PC-3 (cell line): ENCODE measurements at regions of chr13 and their contacts with region 1.

Region 1: DNA sequence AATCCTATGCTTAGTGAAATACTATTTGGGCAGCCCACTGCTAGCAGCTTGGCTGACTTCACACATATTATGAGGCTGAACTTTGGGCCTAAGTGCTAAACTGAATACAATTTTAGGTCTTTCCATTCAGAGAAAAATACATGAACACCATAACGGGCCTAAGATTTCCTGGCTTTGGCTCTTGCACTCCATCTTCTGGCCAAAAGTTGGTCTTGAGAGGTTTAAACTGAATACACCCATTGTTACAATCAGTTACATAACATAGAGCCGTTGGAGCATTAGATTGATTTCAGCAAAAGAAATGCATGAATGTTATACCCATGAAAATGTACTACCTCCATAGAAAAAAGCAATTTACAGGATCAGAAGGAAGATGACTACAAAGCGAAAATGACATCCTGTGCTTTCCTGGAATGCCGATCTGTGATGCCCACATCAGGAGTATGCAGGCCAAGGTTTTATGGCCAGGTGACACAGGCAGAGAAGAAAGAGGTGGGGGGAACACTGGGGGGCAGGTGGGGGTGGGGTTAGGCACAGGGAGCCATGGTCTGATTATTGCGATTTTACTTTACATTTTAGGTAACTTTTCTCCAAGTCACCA is 11.1 kb upstream of the SHISA2 start:
- DNase-seq: peak; percentile 76
- ATAC-seq: peak; percentile 66
- H3K4me3 ChIP-seq: no peak overlapping the region
- H3K27ac ChIP-seq: 0 out of 2 replicates have a peak overlapping the region, but pooled peaks have one; percentile 40
- H3K4me1 ChIP-seq: peaks cover 22% of the 10 kb centered on the region
- H3K27me3 ChIP-seq: no peaks in the 10 kb centered on the region
- CTCF ChIP-seq: peak; percentile 90

Region 2: DNA sequence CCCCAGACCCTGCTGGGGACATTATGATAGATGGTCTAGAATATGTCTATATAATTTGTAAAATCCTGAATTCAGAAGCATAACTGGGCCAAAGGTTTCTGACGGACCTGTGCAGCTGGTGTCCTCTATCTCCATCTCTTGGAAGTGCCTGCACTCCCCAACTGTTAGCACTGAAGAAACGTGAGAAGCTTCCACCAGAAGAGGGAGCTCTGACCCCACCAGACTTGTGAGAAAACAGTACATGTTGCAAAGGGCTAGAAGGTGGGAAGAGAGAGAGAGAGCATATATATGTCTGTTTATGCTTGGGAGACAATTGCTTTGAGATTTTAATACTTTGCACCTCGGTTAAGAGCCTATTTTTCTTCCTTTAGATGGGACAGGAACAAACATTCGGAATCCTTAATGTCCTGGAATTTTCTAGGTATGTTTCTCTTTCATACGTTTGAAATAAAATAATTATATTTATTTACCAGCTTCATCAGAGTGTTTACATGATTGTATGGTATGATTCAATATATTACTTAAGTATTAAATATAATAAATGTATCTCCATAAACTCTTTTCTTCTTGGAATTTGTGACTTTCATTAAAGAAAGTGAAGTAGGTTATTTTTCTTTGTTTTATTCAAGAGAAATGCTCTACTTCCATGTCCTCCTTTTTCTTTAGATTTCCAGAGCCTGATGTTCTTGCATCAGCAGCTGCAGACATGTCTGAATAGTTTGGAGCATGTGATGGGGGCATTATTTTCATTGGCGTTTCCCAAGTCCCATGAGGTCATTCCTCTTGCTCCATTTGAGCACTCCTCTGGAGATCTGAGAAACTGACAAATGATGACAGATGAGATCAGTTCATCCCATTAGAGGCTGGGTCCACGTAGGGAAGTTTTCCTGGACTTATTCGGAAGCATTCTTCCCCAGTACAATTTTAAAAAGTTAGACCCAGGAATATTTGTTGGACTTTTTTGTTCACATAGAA is 488.2 kb before region 1 on chr13:
- CTCF ChIA-PET with region 1: interaction called, 9 read pairs
- POLR2A ChIA-PET with region 1: no interaction called
- intact Hi-C with region 1: loop called (anchors 1 kb)
- DNase-seq: peak; percentile 88
- ATAC-seq: peak; percentile 97
- H3K4me3 ChIP-seq: no peak overlapping the region
- H3K27ac ChIP-seq: no peak overlapping the region
- H3K4me1 ChIP-seq: no peaks in the 10 kb centered on the region
- H3K27me3 ChIP-seq: peaks cover 64% of the 10 kb centered on the region
- CTCF ChIP-seq: peak; percentile 88

Region 3: GRCh38 chr13:25827831-25828465 is 235.0 kb before region 1 on chr13:
- CTCF ChIA-PET with region 1: interaction called, 10 read pairs
- POLR2A ChIA-PET with region 1: no interaction called
- intact Hi-C with region 1: loop called (anchors 1 kb)
- DNase-seq: no peak
- ATAC-seq: no peak
- H3K4me3 ChIP-seq: no peak overlapping the region
- H3K27ac ChIP-seq: no peak overlapping the region
- H3K4me1 ChIP-seq: no peaks in the 10 kb centered on the region
- H3K27me3 ChIP-seq: no peaks in the 10 kb centered on the region
- CTCF ChIP-seq: no peak

Region 4: DNA sequence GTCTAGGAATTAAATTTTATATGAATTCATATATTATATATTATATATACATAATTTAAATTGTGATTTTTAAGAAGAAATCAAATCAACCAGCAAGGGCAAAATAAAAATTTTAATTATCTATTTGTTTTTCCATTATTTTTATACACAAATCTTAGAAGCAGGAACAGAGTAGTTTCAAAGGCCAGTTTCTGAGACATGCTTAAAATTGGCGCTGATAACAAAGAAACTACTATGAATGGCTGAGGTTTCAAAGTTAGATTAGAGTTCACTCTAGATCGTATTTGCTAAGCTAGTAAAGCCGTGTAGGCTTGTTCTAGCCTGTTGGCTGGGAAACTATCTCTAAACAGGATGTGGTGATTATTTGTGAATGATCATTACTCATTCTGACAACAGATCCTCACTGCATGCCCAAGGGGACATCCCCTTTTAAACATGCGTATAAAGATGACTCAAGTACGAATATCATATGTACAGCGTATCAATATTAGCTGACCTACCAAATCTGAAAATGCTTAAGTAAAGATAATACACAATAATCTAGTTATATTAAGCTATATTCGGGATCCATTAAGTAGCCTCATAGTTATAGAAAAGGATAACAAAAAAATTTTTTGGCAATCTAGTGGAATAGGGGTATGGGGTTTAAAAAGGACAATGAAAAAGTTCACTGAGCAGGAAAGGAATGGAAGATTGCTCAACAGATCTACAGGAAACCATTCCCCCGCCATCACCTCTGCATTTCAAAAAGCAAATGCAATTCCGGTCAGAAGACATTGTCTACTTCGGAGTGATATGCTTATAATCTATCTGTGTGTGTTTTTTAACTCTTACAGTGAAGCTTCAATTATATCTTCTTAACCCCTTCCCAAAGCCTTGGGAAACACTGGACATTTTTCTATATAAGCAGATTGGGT is 161.2 kb before region 1 on chr13:
- CTCF ChIA-PET with region 1: interaction called, 3 read pairs
- POLR2A ChIA-PET with region 1: no interaction called
- intact Hi-C with region 1: loop called (anchors 1 kb)
- DNase-seq: peak; percentile 96
- ATAC-seq: peak; percentile 88
- H3K4me3 ChIP-seq: peak overlapping the region; percentile 15; the same call in 1 of the 2 replicates
- H3K27ac ChIP-seq: peak overlapping the region; percentile 88
- H3K4me1 ChIP-seq: peaks cover 37% of the 10 kb centered on the region
- H3K27me3 ChIP-seq: no peaks in the 10 kb centered on the region
- CTCF ChIP-seq: no peak

Region 5: DNA sequence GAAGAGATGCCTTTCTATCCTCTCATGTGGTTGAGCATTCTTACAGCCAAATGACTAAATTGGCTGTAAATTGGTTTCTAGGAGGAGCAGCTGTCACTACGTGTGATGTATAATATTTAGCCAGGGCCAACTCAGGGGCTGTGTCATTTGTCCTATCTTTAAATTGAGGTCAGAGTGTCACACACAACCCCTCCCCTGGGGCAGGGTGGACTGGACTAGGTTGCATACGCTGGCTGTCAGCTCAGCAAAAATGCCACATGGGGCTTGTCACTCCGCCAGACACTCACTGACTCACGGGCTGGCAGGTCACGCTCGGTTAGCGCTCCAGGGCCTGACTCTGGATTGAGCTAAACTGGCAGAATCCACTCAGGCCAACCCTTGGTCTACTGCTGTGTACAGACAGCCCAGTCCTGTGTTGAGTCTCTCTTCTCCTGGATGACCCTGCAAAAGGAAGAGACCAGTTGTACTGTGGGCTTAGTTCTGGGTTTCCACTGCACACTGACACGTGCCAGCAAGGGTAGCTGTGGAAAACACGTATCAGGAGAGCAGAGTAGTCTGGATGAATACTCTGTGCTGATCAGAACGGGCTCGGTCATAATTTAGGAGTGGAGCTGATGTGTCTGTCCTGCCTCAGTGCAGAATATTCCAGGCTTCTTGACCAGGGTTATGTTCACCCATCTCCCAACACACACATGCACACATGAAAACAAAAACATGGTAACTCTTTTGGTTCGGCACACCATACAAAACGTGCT is 40.2 kb before region 1 on chr13:
- CTCF ChIA-PET with region 1: interaction called, 5 read pairs
- POLR2A ChIA-PET with region 1: no interaction called
- intact Hi-C with region 1: loop called (anchors 1 kb)
- DNase-seq: peak; percentile 97
- ATAC-seq: peak; percentile 87
- H3K4me3 ChIP-seq: no peak overlapping the region
- H3K27ac ChIP-seq: peak overlapping the region; percentile 99
- H3K4me1 ChIP-seq: peaks cover 57% of the 10 kb centered on the region
- H3K27me3 ChIP-seq: no peaks in the 10 kb centered on the region
- CTCF ChIP-seq: no peak